ENCODE measurements at regions of chr10 and their contacts with region 1.

Region 1: GRCh38 chr10:26737730-26738129 is 40.2 kb downstream of the PDSS1 start:
- DNase-seq: no peak
- H3K4me3 ChIP-seq: no peak overlapping the region
- H3K4me3 Mint-ChIP-seq: peak overlapping the region; percentile 50
- H3K27ac Mint-ChIP-seq: peak overlapping the region; percentile 91
- H3K4me1 ChIP-seq: peaks cover 62% of the 10 kb centered on the region
- H3K4me1 Mint-ChIP-seq: peaks cover 46% of the 10 kb centered on the region
- H3K27me3 ChIP-seq: no peaks in the 10 kb centered on the region
- H3K27me3 Mint-ChIP-seq: no peaks in the 10 kb centered on the region
- CTCF ChIP-seq: no peak

Region 2: GRCh38 chr10:26697163-26697921 is 40.4 kb before region 1 on chr10 and contains the start of gene PDSS1:
- CTCF ChIA-PET with region 1: no interaction called
- POLR2A ChIA-PET with region 1: no interaction called
- intact Hi-C with region 1: loop called (anchors 1 kb)
- DNase-seq: peak; percentile 79 to 84
- H3K4me3 ChIP-seq: peak within 1 kb of the TSS; percentile 94
- H3K4me3 Mint-ChIP-seq: peak within 1 kb of the TSS; percentile 99
- H3K27ac Mint-ChIP-seq: peak within 1 kb of the TSS; percentile 94
- H3K4me1 ChIP-seq: peaks cover 17% of the 10 kb centered on the region
- H3K4me1 Mint-ChIP-seq: peaks cover 18% of the 10 kb centered on the region
- H3K27me3 ChIP-seq: no peaks in the 10 kb centered on the region
- H3K27me3 Mint-ChIP-seq: no peaks in the 10 kb centered on the region
- CTCF ChIP-seq: no peak
- total RNA-seq, gene PDSS1: 22.4 and 24.9 TPM in 2 replicates

Region 3: GRCh38 chr10:26860443-26861204 is 122.9 kb after region 1 on chr10 and contains the start of gene ABI1:
- CTCF ChIA-PET with region 1: no interaction called
- POLR2A ChIA-PET with region 1: no interaction called
- intact Hi-C with region 1: loop called (anchors 1 kb)
- DNase-seq: peak; percentile 99 to 100
- H3K4me3 ChIP-seq: peak within 1 kb of the TSS; percentile 82
- H3K4me3 Mint-ChIP-seq: peak within 1 kb of the TSS; percentile 97
- H3K27ac Mint-ChIP-seq: peak within 1 kb of the TSS; percentile 99
- H3K4me1 ChIP-seq: peaks cover 13% of the 10 kb centered on the region
- H3K4me1 Mint-ChIP-seq: peaks cover 26% of the 10 kb centered on the region
- H3K27me3 ChIP-seq: no peaks in the 10 kb centered on the region
- H3K27me3 Mint-ChIP-seq: no peaks in the 10 kb centered on the region
- CTCF ChIP-seq: no peak
- total RNA-seq, gene ABI1: 89.6 and 95.8 TPM in 2 replicates